K562 (cell line): ENCODE measurements at regions of chr21 and their contacts with region 1.

Region 1: DNA sequence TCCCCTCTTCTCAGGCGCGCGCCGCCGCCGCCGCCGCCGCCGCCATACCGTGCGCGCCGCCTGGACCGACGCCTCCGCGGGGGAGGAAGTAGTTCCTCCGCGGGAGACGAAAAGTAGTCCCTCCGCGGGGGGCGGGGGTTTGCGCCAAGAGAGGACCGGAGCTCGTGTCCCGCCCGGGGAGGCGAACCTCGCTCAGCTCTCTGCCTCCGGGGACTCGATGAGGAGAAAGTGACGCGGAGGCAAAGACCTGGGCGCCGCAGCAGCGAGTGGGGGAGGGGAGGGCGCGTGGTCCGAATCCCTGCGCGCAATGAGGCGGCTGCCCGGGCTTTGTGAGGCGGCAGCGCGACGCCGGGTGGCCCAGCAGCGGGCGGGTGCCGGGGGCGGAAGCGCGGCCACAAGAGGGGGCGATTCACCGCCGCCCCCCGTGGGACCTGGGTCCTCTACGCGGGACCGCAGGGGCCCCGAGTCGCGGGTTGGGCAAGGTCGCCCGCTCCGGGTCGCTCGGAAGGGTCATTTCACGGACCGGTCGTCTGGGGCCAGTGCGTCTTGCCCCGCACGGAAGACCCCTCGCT is at the start of gene BRWD1:
- DNase-seq: peak; percentile 91 to 93 (median 92)
- ATAC-seq: peak; percentile 71
- H3K4me3 ChIP-seq: peak within 1 kb of the TSS; percentile 62
- H3K27ac ChIP-seq: peak within 1 kb of the TSS; percentile 97
- H3K4me1 ChIP-seq: peaks cover 29 to 42% of the 10 kb centered on the region in 2 experiments
- H3K27me3 ChIP-seq: no peaks in the 10 kb centered on the region
- CTCF ChIP-seq: peak; percentile 54 to 76 (median 71)
- EP300 ChIP-seq: peak; percentile 43
- POLR2A ChIP-seq: peak; percentile 89
- RAD21 ChIP-seq: peak; percentile 75 to 83
- polyA plus RNA-seq, gene BRWD1: 10.1 to 11.2 TPM

Region 2: DNA sequence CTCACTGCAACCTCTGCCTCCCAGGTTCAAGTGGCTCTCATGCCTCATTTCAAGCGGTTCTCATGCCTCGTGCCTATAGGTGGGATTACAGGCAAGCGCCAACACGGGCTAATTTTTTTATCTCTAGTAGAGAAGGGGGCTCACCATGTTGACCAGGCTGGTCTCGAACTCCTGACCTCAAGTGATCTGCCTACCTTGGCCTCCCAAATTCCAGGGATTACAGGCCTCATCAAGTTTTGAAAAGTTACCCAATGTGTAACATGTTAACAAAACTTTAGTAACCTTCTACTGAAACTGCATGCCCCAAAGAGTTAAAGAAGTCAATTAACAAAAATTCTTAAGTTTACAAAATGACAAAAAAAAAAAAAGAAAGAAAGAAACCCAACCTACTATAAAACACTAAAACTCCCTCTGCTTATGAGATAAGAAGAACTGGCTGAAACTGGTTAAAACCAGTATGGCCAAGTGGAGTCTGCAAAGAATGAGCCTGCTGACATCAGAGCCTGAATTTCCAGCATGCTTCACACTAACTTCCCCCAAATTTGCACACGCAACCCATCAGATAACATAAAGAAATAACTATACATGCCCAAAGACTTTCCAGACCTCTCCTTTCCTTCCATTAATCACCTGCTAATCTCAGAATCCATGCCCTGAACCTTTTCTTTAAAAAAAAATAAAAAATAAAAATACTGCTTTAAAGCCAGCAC is 104.9 kb before region 1 on chr21:
- CTCF ChIA-PET with region 1: no interaction called
- POLR2A ChIA-PET with region 1: no interaction called
- in situ Hi-C with region 1: no loop called
- intact Hi-C with region 1: loop called (anchors 5 kb)
- DNase-seq: peak; percentile 27 to 81 (median 48)
- ATAC-seq: peak; percentile 88
- H3K4me3 ChIP-seq: no peak overlapping the region
- H3K27ac ChIP-seq: peak overlapping the region; percentile 65
- H3K4me1 ChIP-seq: peaks cover 0 to 12% of the 10 kb centered on the region in 2 experiments; a peak in 3 of 5 replicates
- H3K27me3 ChIP-seq: no peaks in the 10 kb centered on the region
- CTCF ChIP-seq: no peak
- EP300 ChIP-seq: peak; percentile 64; the same call in 1 of the 2 replicates
- POLR2A ChIP-seq: no peak
- RAD21 ChIP-seq: no peak

Region 3: GRCh38 chr21:39326607-39327307 is 13.1 kb after region 1 on chr21:
- CTCF ChIA-PET with region 1: no interaction called
- POLR2A ChIA-PET with region 1: interaction called, 21 read pairs
- in situ Hi-C with region 1: no loop called
- intact Hi-C with region 1: no loop called
- DNase-seq: no peak
- ATAC-seq: no peak
- H3K4me3 ChIP-seq: no peak overlapping the region
- H3K27ac ChIP-seq: no peak overlapping the region
- H3K4me1 ChIP-seq: peaks cover 1 to 4% of the 10 kb centered on the region in 2 experiments; a peak in 3 of 5 replicates
- H3K27me3 ChIP-seq: no peaks in the 10 kb centered on the region
- CTCF ChIP-seq: no peak
- EP300 ChIP-seq: no peak
- POLR2A ChIP-seq: no peak
- RAD21 ChIP-seq: no peak

Region 4: GRCh38 chr21:39339231-39339630 is 25.6 kb after region 1 on chr21:
- CTCF ChIA-PET with region 1: no interaction called
- POLR2A ChIA-PET with region 1: interaction called, 73 read pairs
- in situ Hi-C with region 1: no loop called
- intact Hi-C with region 1: no loop called
- DNase-seq: no peak
- ATAC-seq: no peak
- H3K4me3 ChIP-seq: no peak overlapping the region
- H3K27ac ChIP-seq: no peak overlapping the region
- H3K4me1 ChIP-seq: peaks cover 0 to 5% of the 10 kb centered on the region in 2 experiments; a peak in 1 of 5 replicates
- H3K27me3 ChIP-seq: no peaks in the 10 kb centered on the region
- CTCF ChIP-seq: no peak
- EP300 ChIP-seq: no peak
- POLR2A ChIP-seq: no peak
- RAD21 ChIP-seq: no peak

Region 5: DNA sequence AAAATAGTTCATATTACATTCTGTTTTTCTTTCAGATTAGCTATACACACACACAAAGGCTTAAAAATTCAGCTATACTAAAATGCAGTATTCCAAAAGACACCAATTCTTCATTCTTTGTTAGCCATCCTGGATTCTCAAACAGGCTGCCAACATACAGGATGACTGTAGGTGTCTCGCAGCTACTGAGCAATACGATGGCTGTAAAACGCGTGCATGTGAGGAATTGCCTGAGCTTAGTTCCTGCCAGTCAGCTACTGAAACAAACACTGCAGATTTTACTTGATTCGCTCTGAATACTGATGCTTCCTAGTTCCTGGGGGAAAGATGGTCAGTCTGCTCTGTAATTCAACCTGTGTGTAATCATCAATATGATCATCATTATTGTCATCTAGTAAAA is 60.0 kb after region 1 on chr21:
- CTCF ChIA-PET with region 1: no interaction called
- POLR2A ChIA-PET with region 1: interaction called, 10 read pairs
- in situ Hi-C with region 1: no loop called
- intact Hi-C with region 1: no loop called
- DNase-seq: peak in 2 of 4 experiments; percentile 29 to 68
- ATAC-seq: peak; percentile 66
- H3K4me3 ChIP-seq: no peak overlapping the region
- H3K27ac ChIP-seq: no peak overlapping the region
- H3K4me1 ChIP-seq: peaks cover 18 to 28% of the 10 kb centered on the region in 2 experiments
- H3K27me3 ChIP-seq: no peaks in the 10 kb centered on the region
- CTCF ChIP-seq: peak; percentile 40 to 67 (median 67); a peak in 5 of 6 replicates
- EP300 ChIP-seq: no peak
- POLR2A ChIP-seq: no peak
- RAD21 ChIP-seq: peak; percentile 39 to 69; a peak in 3 of 4 replicates

Region 6: DNA sequence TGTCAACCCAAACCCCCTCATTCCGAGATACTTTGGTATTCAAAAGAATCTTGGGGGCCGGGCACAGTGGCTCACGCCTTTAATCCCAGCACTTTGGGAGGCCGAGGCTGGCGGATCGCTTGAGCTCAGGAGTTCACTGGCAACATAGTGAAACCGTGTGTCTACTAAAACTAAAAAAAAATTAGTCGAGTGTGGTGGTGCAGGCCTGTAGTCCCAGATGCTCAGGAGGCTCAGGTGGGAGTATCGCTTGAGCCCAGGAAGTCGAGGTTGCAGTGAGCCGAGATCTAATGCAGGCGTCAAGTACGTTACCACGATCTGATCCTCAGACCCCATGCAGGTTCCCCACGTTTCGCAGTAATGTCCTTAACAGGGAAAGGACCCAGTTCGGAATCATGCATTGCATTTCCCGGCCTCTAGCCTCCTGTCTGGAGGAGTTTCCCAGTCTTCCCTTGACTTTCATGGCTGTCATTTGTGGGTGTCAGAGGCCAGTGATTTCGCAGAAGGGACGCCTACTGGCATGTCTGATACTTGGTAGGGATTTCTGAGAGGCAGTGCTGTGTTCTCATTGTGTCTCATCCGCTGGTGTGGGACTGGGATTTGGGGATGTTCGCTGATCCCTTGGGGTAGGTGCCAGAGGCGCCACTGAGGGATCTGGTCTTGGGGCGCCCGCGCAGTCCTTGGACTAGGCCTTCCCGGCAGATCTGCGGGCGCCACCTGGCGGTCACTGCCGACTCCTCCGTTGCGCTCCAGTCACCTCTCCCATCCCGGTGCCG is 74.6 kb after region 1 on chr21:
- CTCF ChIA-PET with region 1: interaction called, 14 read pairs
- POLR2A ChIA-PET with region 1: interaction called, 9 read pairs
- in situ Hi-C with region 1: loop called (anchors 5 kb)
- intact Hi-C with region 1: loop called (anchors 1 kb)
- DNase-seq: peak; percentile 93 to 96 (median 94)
- ATAC-seq: peak; percentile 96
- H3K4me3 ChIP-seq: peak overlapping the region; percentile 45
- H3K27ac ChIP-seq: peak overlapping the region; percentile 72
- H3K4me1 ChIP-seq: peaks cover 13 to 34% of the 10 kb centered on the region in 2 experiments
- H3K27me3 ChIP-seq: no peaks in the 10 kb centered on the region
- CTCF ChIP-seq: peak; percentile 97 to 98 (median 97)
- EP300 ChIP-seq: 0 out of 2 replicates have a peak, but pooled peaks have one; percentile 16
- POLR2A ChIP-seq: peak; percentile 9
- RAD21 ChIP-seq: peak; percentile 98

Region 7: GRCh38 chr21:39400173-39400572 is 86.5 kb after region 1 on chr21:
- CTCF ChIA-PET with region 1: no interaction called
- POLR2A ChIA-PET with region 1: no interaction called
- in situ Hi-C with region 1: no loop called
- intact Hi-C with region 1: no loop called
- DNase-seq: no peak
- ATAC-seq: no peak
- H3K4me3 ChIP-seq: no peak overlapping the region
- H3K27ac ChIP-seq: no peak overlapping the region
- H3K4me1 ChIP-seq: peaks cover 0 to 2% of the 10 kb centered on the region in 2 experiments; a peak in 2 of 5 replicates
- H3K27me3 ChIP-seq: no peaks in the 10 kb centered on the region
- CTCF ChIP-seq: no peak
- EP300 ChIP-seq: no peak
- POLR2A ChIP-seq: no peak
- RAD21 ChIP-seq: no peak